CD8-positive, alpha-beta T cell (primary cell): ENCODE measurements at regions of chr2 and their contacts with region 1.

Region 1: GRCh38 chr2:168346725-168347477 is 99.5 kb upstream of the STK39 start:
- DNase-seq: peak; percentile 42 to 81 (median 69)
- ATAC-seq: peak; percentile 91
- H3K4me3 ChIP-seq: peak overlapping the region; percentile 47 to 54
- H3K4me3 Mint-ChIP-seq: peak overlapping the region; percentile 85
- H3K27ac ChIP-seq: no peak overlapping the region
- H3K27ac Mint-ChIP-seq: peak overlapping the region; percentile 28
- H3K4me1 ChIP-seq: peaks cover 5% of the 10 kb centered on the region
- H3K4me1 Mint-ChIP-seq: peaks cover 7% of the 10 kb centered on the region
- H3K27me3 ChIP-seq: no peaks in the 10 kb centered on the region
- H3K27me3 Mint-ChIP-seq: peaks cover 3% of the 10 kb centered on the region
- CTCF ChIP-seq: peak; percentile 91

Region 2: GRCh38 chr2:168359082-168359481 is 12.2 kb after region 1 on chr2:
- CTCF ChIA-PET with region 1: interaction called, 14 read pairs
- POLR2A ChIA-PET with region 1: no interaction called
- intact Hi-C with region 1: no loop called
- DNase-seq: no peak
- ATAC-seq: no peak
- H3K4me3 ChIP-seq: no peak overlapping the region
- H3K4me3 Mint-ChIP-seq: no peak overlapping the region
- H3K27ac ChIP-seq: no peak overlapping the region
- H3K27ac Mint-ChIP-seq: no peak overlapping the region
- H3K4me1 ChIP-seq: peaks cover 15% of the 10 kb centered on the region
- H3K4me1 Mint-ChIP-seq: peaks cover 31% of the 10 kb centered on the region
- H3K27me3 ChIP-seq: no peaks in the 10 kb centered on the region
- H3K27me3 Mint-ChIP-seq: no peaks in the 10 kb centered on the region
- CTCF ChIP-seq: no peak

Region 3: GRCh38 chr2:168573128-168573903 is 226.4 kb after region 1 on chr2:
- CTCF ChIA-PET with region 1: interaction called, 3 read pairs
- POLR2A ChIA-PET with region 1: no interaction called
- intact Hi-C with region 1: loop called in 1 of 2 experiments (anchors 10 kb)
- DNase-seq: no peak
- ATAC-seq: no peak
- H3K4me3 ChIP-seq: no peak overlapping the region
- H3K4me3 Mint-ChIP-seq: no peak overlapping the region
- H3K27ac ChIP-seq: no peak overlapping the region
- H3K27ac Mint-ChIP-seq: peak overlapping the region; percentile 38
- H3K4me1 ChIP-seq: peaks cover 7% of the 10 kb centered on the region
- H3K4me1 Mint-ChIP-seq: peaks cover 21% of the 10 kb centered on the region
- H3K27me3 ChIP-seq: no peaks in the 10 kb centered on the region
- H3K27me3 Mint-ChIP-seq: no peaks in the 10 kb centered on the region
- CTCF ChIP-seq: no peak

Region 4: DNA sequence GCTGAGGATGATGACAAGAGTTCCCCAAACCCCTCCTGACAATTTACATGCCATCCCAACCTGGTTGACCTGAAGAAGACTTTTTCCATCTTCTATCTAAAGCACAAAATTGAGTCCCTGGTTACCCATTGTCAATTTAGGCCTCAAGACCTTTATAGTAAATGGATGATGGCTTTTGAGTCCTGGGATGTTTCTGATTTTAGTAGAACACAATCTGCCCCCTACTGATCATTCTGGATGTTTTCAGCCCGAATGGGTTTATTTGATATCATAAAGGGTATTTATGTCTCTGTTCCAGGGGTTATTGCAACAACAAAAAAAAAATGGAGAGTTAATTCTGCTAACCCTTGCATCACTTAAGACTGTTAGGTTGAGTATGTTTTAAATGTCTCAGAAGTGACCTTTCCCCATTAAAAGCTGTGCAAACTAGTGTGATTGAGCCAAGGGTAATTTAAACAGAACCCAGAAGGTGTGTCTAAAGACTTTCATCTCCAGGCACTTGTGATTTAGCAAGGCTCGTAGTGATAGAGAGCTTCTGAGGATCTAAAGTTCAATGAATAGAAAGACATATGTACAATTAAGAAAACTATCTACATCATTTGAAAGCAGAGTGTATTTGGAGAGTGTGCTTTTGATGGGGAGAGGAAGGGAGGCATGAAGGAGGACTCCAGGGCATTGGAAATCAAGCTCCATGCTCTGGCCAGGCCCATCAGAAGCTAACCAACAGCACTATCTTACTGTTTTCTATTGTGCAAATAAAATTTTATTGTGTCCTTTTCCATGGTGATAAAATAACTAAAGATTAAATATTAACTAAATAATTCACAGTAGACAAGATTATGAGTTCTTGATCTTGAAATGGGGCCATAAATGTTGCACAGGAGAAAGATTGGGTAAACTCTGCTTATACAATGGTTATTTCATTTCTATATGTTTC is 358.9 kb after region 1 on chr2:
- CTCF ChIA-PET with region 1: interaction called, 36 read pairs
- POLR2A ChIA-PET with region 1: no interaction called
- intact Hi-C with region 1: loop called (anchors 1 to 5 kb)
- DNase-seq: peak in 2 of 9 experiments; percentile 13 to 37
- ATAC-seq: no peak
- H3K4me3 ChIP-seq: no peak overlapping the region
- H3K4me3 Mint-ChIP-seq: no peak overlapping the region
- H3K27ac ChIP-seq: no peak overlapping the region
- H3K27ac Mint-ChIP-seq: no peak overlapping the region
- H3K4me1 ChIP-seq: no peaks in the 10 kb centered on the region
- H3K4me1 Mint-ChIP-seq: peaks cover 2% of the 10 kb centered on the region
- H3K27me3 ChIP-seq: no peaks in the 10 kb centered on the region
- H3K27me3 Mint-ChIP-seq: no peaks in the 10 kb centered on the region
- CTCF ChIP-seq: no peak

Region 5: DNA sequence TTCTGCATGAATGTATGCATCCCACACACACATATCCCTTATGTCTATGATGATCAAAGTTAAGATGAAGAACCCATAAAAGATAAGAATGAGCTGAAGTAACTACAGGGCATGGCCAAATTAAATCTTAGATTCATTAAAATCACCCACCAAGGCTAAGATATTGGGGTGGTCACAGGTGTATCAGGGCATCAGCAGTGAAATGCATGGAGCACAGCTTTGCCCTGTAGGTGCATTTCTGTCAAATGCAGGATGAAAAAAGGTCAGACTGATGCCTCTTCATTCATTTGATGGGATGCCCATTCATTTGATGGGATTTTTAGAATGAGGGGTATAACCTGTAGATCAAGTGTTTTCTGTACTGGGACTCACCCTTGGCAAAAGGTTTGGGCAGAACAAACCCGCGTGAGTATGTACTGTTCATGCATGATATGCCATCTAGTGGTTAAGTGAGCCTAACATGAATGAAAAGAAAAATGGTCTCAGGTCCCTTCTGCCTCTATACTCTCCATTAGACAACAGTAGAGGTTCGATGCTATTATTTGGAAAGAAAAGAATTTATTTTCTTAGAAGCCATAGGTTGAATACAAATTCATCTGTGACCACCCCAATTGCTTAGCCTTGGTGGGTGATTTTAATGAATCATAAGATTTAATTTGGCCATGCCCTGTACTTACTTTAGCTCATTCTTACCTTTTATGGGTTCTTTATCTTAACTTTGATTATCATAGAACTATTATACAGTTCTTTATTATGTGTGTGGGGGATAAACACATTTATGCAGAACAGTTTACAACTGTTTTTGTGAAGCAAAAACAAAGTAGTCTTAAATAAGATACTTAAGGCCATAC is 412.3 kb after region 1 on chr2:
- CTCF ChIA-PET with region 1: interaction called, 82 read pairs
- POLR2A ChIA-PET with region 1: interaction called, 3 read pairs
- intact Hi-C with region 1: loop called (anchors 1 kb)
- DNase-seq: peak in 4 of 9 experiments; percentile 20 to 71 (median 45)
- ATAC-seq: peak; percentile 81
- H3K4me3 ChIP-seq: no peak overlapping the region
- H3K4me3 Mint-ChIP-seq: no peak overlapping the region
- H3K27ac ChIP-seq: no peak overlapping the region
- H3K27ac Mint-ChIP-seq: peak overlapping the region; percentile 1
- H3K4me1 ChIP-seq: peaks cover 36% of the 10 kb centered on the region
- H3K4me1 Mint-ChIP-seq: peaks cover 48% of the 10 kb centered on the region
- H3K27me3 ChIP-seq: no peaks in the 10 kb centered on the region
- H3K27me3 Mint-ChIP-seq: no peaks in the 10 kb centered on the region
- CTCF ChIP-seq: no peak

Region 6: DNA sequence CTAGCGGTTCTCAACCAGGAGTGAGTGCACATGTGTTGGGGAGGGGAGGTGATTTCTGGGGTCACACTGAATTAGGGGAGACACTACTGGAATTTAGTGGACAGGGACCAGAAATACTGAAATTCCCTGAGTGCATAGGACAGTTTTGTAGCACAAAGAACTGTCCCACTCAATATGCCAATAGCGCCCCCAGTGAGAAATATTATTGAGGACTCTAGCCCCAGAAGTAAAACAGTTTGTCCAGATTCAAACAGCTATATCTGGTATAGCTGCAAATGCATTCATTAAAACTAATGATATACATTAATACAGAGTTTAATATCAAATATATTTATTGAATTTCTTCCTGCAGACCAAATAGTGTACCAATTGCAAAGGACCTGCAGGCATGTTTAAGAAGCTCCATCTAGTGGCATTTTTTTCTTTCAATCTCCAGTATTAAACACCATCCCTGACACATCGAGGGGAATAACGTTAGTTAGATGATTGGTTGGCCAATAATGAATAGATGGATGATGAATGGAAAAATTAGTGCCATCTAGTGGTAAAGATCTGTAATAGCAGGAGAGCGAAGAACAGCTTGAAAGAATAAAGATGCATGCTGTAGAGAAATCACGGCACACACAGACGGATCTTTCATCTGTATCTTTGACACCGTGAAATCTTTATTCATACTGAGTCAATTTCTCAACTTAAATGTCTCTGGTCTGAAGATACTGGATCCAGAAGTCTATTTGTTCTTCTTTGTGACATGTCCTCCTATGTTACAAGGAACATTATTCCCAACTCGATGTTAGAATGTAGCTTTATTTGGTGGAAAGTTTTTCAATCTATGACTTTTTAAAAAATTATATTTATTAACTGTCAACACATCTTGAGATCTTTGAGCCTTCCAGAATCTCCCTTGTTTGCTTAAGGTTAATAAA is 784.9 kb after region 1 on chr2:
- CTCF ChIA-PET with region 1: no interaction called
- POLR2A ChIA-PET with region 1: no interaction called
- intact Hi-C with region 1: loop called in 1 of 2 experiments (anchors 5 kb)
- DNase-seq: peak in 2 of 9 experiments; percentile 73 to 77
- ATAC-seq: peak; percentile 91
- H3K4me3 ChIP-seq: no peak overlapping the region
- H3K4me3 Mint-ChIP-seq: no peak overlapping the region
- H3K27ac ChIP-seq: no peak overlapping the region
- H3K27ac Mint-ChIP-seq: no peak overlapping the region
- H3K4me1 ChIP-seq: no peaks in the 10 kb centered on the region
- H3K4me1 Mint-ChIP-seq: peaks cover 13% of the 10 kb centered on the region
- H3K27me3 ChIP-seq: no peaks in the 10 kb centered on the region
- H3K27me3 Mint-ChIP-seq: no peaks in the 10 kb centered on the region
- CTCF ChIP-seq: peak; percentile 95